IMR-90 (cell line): ENCODE measurements at regions of chr6 and their contacts with region 1.

Region 1: DNA sequence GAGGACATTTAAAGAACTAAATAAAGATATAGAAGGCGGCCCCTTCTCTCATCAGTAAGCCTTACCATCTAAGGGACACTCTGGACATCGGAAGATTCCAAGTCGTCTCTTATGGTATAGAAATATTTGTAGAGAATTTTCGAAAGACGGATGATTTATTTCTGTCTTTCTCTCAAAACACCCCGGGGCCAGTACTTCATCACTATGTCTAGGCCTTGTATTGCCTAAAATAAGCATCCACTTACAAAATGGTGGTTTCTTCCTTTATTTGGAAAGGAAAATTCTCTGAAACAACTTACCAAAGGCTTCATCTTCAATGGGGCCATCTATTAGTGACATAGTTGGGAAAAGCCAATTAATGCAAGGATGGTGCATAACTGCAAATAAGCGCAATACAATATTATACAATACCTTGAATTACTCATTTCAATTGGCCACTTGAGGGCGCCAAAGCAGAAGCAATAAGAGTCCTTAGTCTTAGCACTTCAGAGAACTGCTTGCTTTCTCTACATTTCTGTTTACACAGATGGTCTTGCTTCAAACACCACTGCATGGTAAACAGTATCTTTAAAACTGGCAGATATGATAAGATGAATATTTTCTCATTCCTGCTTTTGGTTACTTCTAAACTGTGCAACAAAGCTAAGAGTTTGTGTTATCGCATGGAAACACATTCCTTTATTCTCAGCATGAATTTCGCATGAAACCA is 113.2 kb downstream of the VIP start:
- DNase-seq: peak; percentile 74
- ATAC-seq: peak; percentile 95
- H3K4me3 ChIP-seq: no peak overlapping the region
- H3K27ac ChIP-seq: no peak overlapping the region
- H3K4me1 ChIP-seq: no peaks in the 10 kb centered on the region
- H3K27me3 ChIP-seq: no peaks in the 10 kb centered on the region; the same call in 1 of the 2 replicates
- CTCF ChIP-seq: peak; percentile 73
- POLR2A ChIP-seq: no peak
- RAD21 ChIP-seq: peak; percentile 84

Region 2: DNA sequence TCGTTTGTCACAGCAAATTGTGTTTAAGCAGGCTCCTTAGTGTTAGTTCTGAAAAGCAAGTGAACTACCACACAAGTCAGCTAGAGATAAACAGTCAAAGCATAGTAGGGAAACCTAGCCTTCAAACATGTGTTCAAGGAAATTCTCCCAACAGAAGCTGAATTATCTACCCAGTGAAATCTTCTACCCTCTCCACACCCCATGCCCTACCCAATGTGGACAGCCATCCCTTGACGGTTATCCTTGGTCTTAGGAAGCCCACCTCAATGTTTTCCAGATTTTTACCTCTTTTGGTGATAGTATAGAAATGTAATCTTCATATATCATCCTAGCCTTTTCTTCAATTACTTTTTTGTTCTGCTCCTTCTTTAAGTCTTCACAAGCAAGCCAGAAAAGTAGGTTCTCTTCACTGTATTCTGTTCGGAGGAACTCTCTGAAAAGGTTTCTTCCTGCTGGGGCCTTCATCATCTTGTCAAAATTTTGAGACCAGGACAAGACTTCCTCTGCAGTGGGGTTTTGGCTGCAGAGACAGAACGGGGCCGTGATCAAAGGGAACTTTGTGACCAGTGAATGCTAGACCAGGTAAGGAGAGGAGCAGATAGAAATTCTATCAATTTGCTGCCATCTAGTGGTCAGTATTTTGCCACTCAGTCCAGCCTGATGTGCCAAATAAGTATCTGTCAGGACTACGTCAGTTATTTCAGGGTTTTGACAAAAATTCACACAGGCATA is 160.4 kb after region 1 on chr6:
- CTCF ChIA-PET with region 1: no interaction called
- POLR2A ChIA-PET with region 1: no interaction called
- dilution Hi-C with region 1: no loop called
- in situ Hi-C with region 1: no loop called
- intact Hi-C with region 1: loop called (anchors 1 kb)
- DNase-seq: peak; percentile 56
- ATAC-seq: peak; percentile 83
- H3K4me3 ChIP-seq: no peak overlapping the region
- H3K27ac ChIP-seq: no peak overlapping the region
- H3K4me1 ChIP-seq: 0 out of 2 replicates have a peak, but pooled peaks cover 2% of the 10 kb centered on the region
- H3K27me3 ChIP-seq: no peaks in the 10 kb centered on the region
- CTCF ChIP-seq: peak; percentile 69
- POLR2A ChIP-seq: no peak
- RAD21 ChIP-seq: peak; percentile 60